GM10248 (cell line): ENCODE measurements at regions of chr9 and their contacts with region 1.

Region 1: GRCh38 chr9:30995951-30996738 is 1388.3 kb upstream of the ACO1 start:
- DNase-seq: no peak
- CTCF ChIP-seq: no peak

Region 2: GRCh38 chr9:30967484-30967883 is 28.7 kb before region 1 on chr9:
- CTCF ChIA-PET with region 1: no interaction called
- POLR2A ChIA-PET with region 1: no interaction called
- DNase-seq: no peak
- CTCF ChIP-seq: no peak

Region 3: GRCh38 chr9:30982301-30982700 is 13.8 kb before region 1 on chr9:
- CTCF ChIA-PET with region 1: interaction called, 12 read pairs
- POLR2A ChIA-PET with region 1: no interaction called
- DNase-seq: no peak
- CTCF ChIP-seq: no peak